Activated naive CD4-positive, alpha-beta T cell treated with anti-CD3 and anti-CD28 coated beads for 36 hours (primary cell): ENCODE measurements at regions of chr7 and their contacts with region 1.

Region 1: GRCh38 chr7:114959931-114960330 is 38.0 kb downstream of the MDFIC start:
- DNase-seq: no peak
- H3K4me3 Mint-ChIP-seq: no peak overlapping the region
- H3K27ac Mint-ChIP-seq: no peak overlapping the region
- H3K4me1 Mint-ChIP-seq: peaks cover 58% of the 10 kb centered on the region
- H3K27me3 Mint-ChIP-seq: no peaks in the 10 kb centered on the region

Region 2: GRCh38 chr7:114916261-114916892 is 43.6 kb before region 1 on chr7:
- CTCF ChIA-PET with region 1: no interaction called
- intact Hi-C with region 1: loop called (anchors 2 kb)
- DNase-seq: peak; percentile 81
- H3K4me3 Mint-ChIP-seq: peak overlapping the region; percentile 46
- H3K27ac Mint-ChIP-seq: peak overlapping the region; percentile 94
- H3K4me1 Mint-ChIP-seq: peaks cover 66% of the 10 kb centered on the region
- H3K27me3 Mint-ChIP-seq: no peaks in the 10 kb centered on the region

Region 3: GRCh38 chr7:114939484-114940097 is 20.3 kb before region 1 on chr7:
- CTCF ChIA-PET with region 1: interaction called, 3 read pairs
- intact Hi-C with region 1: loop called (anchors 2 kb)
- DNase-seq: no peak
- H3K4me3 Mint-ChIP-seq: no peak overlapping the region
- H3K27ac Mint-ChIP-seq: no peak overlapping the region
- H3K4me1 Mint-ChIP-seq: peaks cover 77% of the 10 kb centered on the region
- H3K27me3 Mint-ChIP-seq: no peaks in the 10 kb centered on the region

Region 4: DNA sequence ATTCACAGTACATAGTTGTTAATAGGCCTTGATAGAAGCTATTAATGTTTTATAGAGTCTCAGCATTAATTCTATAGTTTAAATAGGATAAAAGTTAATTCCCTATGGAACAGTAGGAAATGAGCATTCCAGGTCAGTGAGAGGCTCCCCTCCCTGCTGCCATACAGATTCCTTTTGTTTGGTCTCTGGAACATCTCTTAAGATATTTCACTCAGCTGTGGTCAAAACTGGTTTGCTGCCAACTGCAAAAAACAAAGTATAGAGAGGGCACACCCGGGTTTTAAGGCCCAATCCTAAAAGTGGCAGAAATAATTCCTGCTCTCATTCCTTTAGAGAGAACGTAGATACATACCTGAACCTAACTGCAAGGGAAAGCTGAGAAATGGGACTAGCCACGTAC is 13.2 kb after region 1 on chr7:
- CTCF ChIA-PET with region 1: no interaction called
- intact Hi-C with region 1: loop called (anchors 2 kb)
- DNase-seq: no peak
- H3K4me3 Mint-ChIP-seq: no peak overlapping the region
- H3K27ac Mint-ChIP-seq: no peak overlapping the region
- H3K4me1 Mint-ChIP-seq: peaks cover 67% of the 10 kb centered on the region
- H3K27me3 Mint-ChIP-seq: no peaks in the 10 kb centered on the region

Region 5: DNA sequence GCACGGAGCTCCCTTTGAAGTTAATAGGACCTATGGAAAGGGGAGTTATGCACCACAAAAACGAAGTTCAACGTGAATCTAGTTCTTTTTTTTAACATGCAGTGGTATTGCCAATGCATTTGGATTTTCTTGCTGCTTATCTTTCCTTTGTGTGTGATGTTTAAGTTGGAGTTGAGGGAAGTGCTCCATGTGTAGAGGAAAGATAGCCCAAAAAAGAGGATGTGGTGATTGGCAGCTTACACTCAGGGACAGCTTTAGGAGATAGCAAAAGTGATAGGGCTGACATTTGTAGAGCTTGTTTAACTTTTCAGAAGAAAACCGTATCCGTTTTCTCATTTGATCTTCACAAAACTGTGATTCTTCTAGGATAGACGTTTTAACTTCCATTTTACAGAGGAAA is 63.3 kb after region 1 on chr7:
- CTCF ChIA-PET with region 1: no interaction called
- intact Hi-C with region 1: no loop called
- DNase-seq: no peak
- H3K4me3 Mint-ChIP-seq: no peak overlapping the region
- H3K27ac Mint-ChIP-seq: no peak overlapping the region
- H3K4me1 Mint-ChIP-seq: peaks cover 21% of the 10 kb centered on the region
- H3K27me3 Mint-ChIP-seq: no peaks in the 10 kb centered on the region